Naive thymus-derived CD4-positive, alpha-beta T cell (primary cell): ENCODE measurements at regions of chr12 and their contacts with region 1.

Region 1: GRCh38 chr12:122895705-122896636 is at the start of gene VPS37B:
- DNase-seq: peak; percentile 91 to 97 (median 94)
- ATAC-seq: peak; percentile 85
- H3K4me3 ChIP-seq: peak within 1 kb of the TSS; percentile 82
- H3K4me3 Mint-ChIP-seq: peak within 1 kb of the TSS; percentile 86 to 99 (median 95)
- H3K27ac ChIP-seq: peak within 1 kb of the TSS; percentile 97
- H3K27ac Mint-ChIP-seq: peak within 1 kb of the TSS; percentile 72 to 100 (median 99)
- H3K4me1 ChIP-seq: peaks cover 59 to 75% of the 10 kb centered on the region in 2 donors
- H3K4me1 Mint-ChIP-seq: peaks cover 67 to 96% (median 87%) of the 10 kb centered on the region in 7 donors
- H3K27me3 ChIP-seq: no peaks in the 10 kb centered on the region
- H3K27me3 Mint-ChIP-seq: peaks cover 0 to 13% (median 0%) of the 10 kb centered on the region in 5 donors
- total RNA-seq, gene VPS37B: 25.3 to 101 (median 30.1) TPM

Region 2: GRCh38 chr12:122726080-122726558 is 169.9 kb before region 1 on chr12:
- CTCF ChIA-PET with region 1: no interaction called
- POLR2A ChIA-PET with region 1: no interaction called
- intact Hi-C with region 1: no loop called
- DNase-seq: peak in 1 of 9 donors; percentile 47
- ATAC-seq: peak; percentile 69
- H3K4me3 ChIP-seq: no peak overlapping the region
- H3K4me3 Mint-ChIP-seq: peak overlapping the region in 1 of 10 donors; percentile 57
- H3K27ac ChIP-seq: no peak overlapping the region
- H3K27ac Mint-ChIP-seq: peak overlapping the region in 4 of 9 donors; percentile 17 to 62 (median 38)
- H3K4me1 ChIP-seq: peaks cover 0 to 14% of the 10 kb centered on the region in 2 donors
- H3K4me1 Mint-ChIP-seq: peaks cover 0 to 70% (median 27%) of the 10 kb centered on the region in 7 donors
- H3K27me3 ChIP-seq: no peaks in the 10 kb centered on the region
- H3K27me3 Mint-ChIP-seq: no peaks in the 10 kb centered on the region

Region 3: DNA sequence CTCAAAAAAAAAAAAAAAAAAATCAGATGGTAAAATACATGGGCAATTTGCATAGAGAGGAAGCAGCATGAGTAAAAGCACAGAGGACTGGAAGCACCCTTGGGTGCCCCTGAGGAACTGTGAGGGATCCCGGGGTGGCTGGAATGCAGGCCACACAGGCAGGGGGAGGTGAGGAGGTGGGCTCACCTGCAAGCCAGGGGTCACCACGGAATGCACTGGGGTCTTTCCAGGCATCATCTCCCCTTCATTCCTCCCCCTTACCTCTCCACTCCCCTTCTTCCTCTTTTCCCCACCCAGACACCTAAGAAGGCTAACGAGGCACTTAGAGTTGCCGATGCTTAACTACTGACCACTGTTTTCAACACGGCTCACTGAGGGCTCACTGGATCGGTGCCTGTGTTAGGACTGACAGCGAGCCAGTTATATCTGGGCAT is 75.1 kb before region 1 on chr12:
- CTCF ChIA-PET with region 1: no interaction called
- POLR2A ChIA-PET with region 1: no interaction called
- intact Hi-C with region 1: no loop called
- DNase-seq: no peak
- ATAC-seq: no peak
- H3K4me3 ChIP-seq: no peak overlapping the region
- H3K4me3 Mint-ChIP-seq: no peak overlapping the region
- H3K27ac ChIP-seq: no peak overlapping the region
- H3K27ac Mint-ChIP-seq: no peak overlapping the region
- H3K4me1 ChIP-seq: no peaks in the 10 kb centered on the region
- H3K4me1 Mint-ChIP-seq: no peaks in the 10 kb centered on the region
- H3K27me3 ChIP-seq: no peaks in the 10 kb centered on the region
- H3K27me3 Mint-ChIP-seq: peaks cover 0 to under 1% (median 0%) of the 10 kb centered on the region in 5 donors

Region 4: DNA sequence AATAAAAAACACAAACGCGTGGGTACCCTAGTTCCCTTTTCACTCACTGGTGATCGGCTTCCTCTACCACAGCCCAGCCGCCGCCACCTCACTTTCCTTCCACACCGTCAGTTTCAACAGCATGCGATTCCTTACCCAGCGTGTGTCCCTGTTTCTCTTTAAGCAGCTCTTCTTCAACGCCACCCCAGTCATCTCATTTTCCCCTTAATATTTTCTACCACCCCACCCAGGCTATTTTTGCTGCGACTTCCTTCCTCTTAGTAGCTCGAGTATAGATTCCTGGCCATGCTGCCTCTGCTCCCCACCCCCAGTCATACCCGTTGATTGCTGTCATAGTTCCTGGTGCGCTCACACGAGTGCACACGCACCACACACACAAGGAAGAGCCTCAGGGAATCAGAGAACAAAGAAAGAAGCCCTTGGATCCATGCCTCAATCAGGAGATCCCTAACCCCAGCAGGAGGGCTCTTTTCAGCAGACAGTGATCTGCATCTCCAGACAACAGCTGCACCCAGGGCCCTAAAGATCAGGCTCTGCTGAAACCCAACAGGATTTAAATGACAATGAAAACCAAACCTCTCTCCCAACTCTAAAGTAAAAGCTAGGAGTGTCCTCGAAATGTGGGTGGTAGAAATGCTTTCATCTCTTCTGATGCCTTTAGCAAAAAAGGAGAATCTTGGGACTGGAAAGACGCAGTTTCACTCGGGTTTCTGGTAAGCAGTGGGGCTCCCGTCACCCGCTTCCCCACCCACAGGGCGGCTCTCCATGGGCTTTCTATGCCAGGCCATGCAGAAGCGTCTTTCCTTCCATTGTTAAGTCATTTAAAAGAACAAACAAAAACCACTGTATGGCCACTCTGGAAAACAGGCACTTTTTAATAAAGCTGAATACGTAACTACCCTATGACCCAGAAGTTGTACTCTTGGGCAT is 23.9 kb before region 1 on chr12:
- CTCF ChIA-PET with region 1: interaction called, 10 read pairs
- POLR2A ChIA-PET with region 1: interaction called, 32 read pairs
- intact Hi-C with region 1: loop called in 1 of 2 experiments (anchors 1 kb)
- DNase-seq: peak in 5 of 9 donors; percentile 40 to 71 (median 43)
- ATAC-seq: peak; percentile 61
- H3K4me3 ChIP-seq: peak overlapping the region; percentile 50
- H3K4me3 Mint-ChIP-seq: peak overlapping the region; percentile 82 to 96 (median 89)
- H3K27ac ChIP-seq: peak overlapping the region; percentile 64
- H3K27ac Mint-ChIP-seq: peak overlapping the region; percentile 78 to 97 (median 87)
- H3K4me1 ChIP-seq: peaks cover 31 to 51% of the 10 kb centered on the region in 2 donors
- H3K4me1 Mint-ChIP-seq: peaks cover 47 to 82% (median 68%) of the 10 kb centered on the region in 7 donors
- H3K27me3 ChIP-seq: no peaks in the 10 kb centered on the region
- H3K27me3 Mint-ChIP-seq: peaks cover 0 to 9% (median 0%) of the 10 kb centered on the region in 5 donors

Region 5: DNA sequence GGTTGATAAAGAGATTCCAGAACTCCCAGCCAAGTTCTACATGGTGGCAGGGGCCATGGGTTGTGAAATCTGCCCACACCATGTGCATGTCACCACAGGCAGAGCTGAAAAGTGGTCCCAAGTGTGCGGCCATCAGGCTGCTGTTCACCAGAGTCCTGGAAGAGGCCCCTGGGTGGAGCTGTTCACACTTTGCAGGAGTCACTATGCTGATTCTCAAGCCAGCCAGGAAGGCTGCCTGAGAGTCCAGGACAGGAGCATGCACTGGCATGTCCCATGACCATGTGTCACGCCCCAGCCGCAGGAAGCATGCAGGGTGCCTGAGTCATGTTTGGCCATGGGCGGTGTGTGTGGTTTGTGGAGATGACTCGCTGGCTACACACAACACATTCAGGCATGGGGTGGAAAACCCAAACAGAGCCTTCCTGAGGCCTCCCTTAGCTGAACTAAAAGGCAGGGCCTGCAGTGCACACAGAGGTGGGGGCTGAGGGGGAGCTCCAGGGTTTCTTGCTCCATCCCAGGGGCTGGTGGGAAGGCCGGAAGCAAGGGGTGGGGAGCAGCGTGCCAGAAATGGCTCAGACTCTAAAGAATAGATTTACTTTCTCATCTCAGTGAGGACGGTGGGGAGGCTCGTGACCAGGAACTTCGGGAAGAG is 50.8 kb after region 1 on chr12:
- CTCF ChIA-PET with region 1: no interaction called
- POLR2A ChIA-PET with region 1: interaction called, 3 read pairs
- intact Hi-C with region 1: loop called (anchors 1 to 2 kb)
- DNase-seq: peak in 1 of 9 donors; percentile 88
- ATAC-seq: peak; percentile 87
- H3K4me3 ChIP-seq: no peak overlapping the region
- H3K4me3 Mint-ChIP-seq: peak overlapping the region in 2 of 10 donors; percentile 44 to 77
- H3K27ac ChIP-seq: no peak overlapping the region
- H3K27ac Mint-ChIP-seq: peak overlapping the region in 3 of 9 donors; percentile 41 to 87 (median 67)
- H3K4me1 ChIP-seq: peaks cover 0 to 3% of the 10 kb centered on the region in 2 donors
- H3K4me1 Mint-ChIP-seq: peaks cover 0 to 31% (median 8%) of the 10 kb centered on the region in 7 donors
- H3K27me3 ChIP-seq: no peaks in the 10 kb centered on the region
- H3K27me3 Mint-ChIP-seq: no peaks in the 10 kb centered on the region

Region 6: DNA sequence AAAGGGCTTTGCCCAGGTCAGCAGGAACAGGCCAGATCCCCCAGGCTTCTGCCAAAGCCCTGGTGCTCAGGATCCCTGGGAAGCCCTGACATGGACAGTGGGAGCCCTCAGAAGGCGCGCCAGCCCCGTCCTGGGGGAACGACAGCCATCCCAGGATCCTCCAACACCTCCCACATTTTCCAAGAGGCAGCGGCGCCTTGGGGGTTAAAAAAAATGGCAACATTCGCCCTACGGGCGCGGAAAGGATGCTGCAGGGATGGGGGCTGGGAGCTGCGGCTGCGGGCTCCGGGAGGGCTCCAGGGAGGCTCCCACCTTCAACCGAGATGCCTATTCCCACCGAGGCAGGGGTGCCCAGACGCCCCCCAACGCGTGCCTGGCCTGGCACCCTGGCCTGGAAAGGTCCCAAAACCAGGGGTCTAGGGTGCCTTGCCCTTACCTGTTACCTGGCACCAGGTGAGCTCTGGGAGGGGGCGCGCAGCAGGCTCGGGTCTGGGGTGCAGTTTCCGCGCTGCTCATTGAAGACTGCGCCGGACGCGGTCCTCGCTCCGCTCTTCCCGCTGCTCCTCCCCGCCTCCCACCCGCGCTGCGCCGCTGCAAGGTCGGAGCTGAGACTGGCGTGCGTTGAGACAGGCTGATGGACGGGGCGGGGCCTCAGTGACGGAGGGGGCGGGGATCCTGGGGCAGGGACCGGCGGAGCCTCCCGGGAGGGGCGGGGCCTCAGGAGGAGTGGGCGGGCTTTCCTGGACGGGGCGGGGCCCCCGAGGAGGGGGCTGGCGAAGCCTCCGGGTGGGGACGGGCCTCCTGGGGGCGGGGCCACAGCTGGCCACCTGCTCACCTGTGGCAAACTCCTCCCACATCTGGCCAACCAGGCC is 70.1 kb after region 1 on chr12 and contains the start of gene ABCB9:
- CTCF ChIA-PET with region 1: no interaction called
- POLR2A ChIA-PET with region 1: interaction called, 4 read pairs
- intact Hi-C with region 1: loop called in 1 of 2 experiments (anchors 1 kb)
- DNase-seq: peak; percentile 78 to 95 (median 85)
- ATAC-seq: peak; percentile 99
- H3K4me3 ChIP-seq: peak within 1 kb of the TSS; percentile 80
- H3K4me3 Mint-ChIP-seq: peak within 1 kb of the TSS; percentile 47 to 84 (median 76)
- H3K27ac ChIP-seq: peak within 1 kb of the TSS; percentile 67
- H3K27ac Mint-ChIP-seq: peak within 1 kb of the TSS in 8 of 9 donors; percentile 22 to 90 (median 70)
- H3K4me1 ChIP-seq: peaks cover 10 to 15% of the 10 kb centered on the region in 2 donors
- H3K4me1 Mint-ChIP-seq: peaks cover 5 to 20% (median 12%) of the 10 kb centered on the region in 7 donors
- H3K27me3 ChIP-seq: no peaks in the 10 kb centered on the region
- H3K27me3 Mint-ChIP-seq: no peaks in the 10 kb centered on the region
- total RNA-seq, gene ABCB9: 6.2 to 8.9 (median 7.1) TPM